Sciatic nerve (tissue), 2 donors: ENCODE measurements at regions of chr17 and their contacts with region 1.

Region 1: DNA sequence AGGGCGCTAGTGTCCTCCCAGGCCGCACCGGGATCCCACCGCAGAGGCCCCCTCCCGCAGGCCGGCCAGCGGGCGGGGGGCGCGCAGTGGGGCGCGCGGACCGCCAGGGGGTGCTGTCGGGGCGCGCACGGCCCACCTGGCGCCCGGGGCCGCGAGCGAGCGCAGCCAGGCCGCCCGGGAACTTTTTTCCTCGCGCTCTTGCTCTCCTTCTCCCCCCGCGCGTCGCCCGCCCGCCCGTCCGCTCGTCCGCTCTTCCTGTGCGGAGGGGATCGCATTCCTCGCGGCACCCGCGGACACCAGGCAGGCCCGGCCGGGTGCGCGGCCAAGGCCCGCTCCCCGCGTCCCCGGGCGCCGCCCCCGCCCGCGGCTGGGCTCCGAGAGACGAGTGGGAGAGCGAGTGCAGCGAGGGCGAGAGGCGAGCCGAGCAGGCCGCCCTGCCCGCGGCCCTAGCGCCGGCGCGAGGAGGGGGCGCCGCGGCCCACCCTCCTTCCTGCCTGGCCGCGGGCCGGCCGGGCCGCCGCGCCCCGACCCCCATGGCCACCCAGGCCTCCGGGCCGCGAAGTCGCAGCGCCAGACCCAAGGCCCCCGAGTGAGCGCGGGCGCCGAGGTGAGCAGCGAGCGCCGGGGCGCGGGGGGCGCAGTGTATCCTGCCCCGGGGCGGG is at the start of gene RAI1:
- DNase-seq: peak; percentile 88
- ATAC-seq: peak; percentile 73
- total RNA-seq, gene RAI1: 62.0 TPM

Region 2: DNA sequence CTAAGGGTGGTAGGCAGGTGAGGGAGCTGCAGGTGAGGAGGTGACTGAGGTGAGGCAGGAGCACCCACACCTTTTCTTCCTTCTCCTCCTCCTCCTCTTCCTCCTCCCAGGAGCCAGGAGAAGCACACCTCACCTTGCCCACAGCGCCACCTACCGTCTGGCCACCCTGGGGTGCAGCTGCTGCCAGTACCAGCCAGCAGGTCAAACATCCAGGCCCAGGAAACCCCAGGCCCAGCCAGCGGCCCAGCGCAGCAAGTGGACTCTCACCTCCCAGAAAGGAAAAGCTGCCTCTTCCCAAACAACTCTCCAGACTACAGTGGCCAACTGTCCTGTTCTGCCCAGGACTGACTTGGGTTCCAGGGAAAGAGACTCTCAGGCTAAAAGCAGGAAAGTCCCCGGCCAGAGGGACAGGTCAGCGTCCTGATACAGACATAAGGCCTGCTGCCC is 112.5 kb before region 1 on chr17:
- intact Hi-C with region 1: no loop called
- DNase-seq: peak; percentile 81
- ATAC-seq: no peak

Region 3: DNA sequence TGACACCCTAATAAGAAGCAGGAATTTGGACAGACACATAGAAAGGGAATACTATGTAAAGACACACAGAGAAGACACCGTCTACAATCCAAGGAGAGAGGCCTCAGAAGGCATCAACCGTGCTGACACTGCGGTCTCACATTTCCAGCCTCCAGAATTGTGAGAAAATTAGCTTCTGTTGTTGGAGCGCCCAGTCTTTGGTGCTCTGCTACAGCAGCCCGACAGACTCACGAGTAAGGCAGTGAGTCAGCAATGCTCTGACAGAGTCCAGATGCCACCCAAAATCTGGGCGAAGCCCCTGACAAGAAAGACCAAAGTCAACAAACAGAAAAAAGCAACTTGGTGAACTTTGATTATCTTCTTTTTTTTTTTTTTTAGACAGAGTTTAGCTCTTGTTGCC is 32.6 kb before region 1 on chr17:
- intact Hi-C with region 1: no loop called
- DNase-seq: no peak
- ATAC-seq: no peak

Region 4: GRCh38 chr17:17792551-17793377 is 111.4 kb after region 1 on chr17:
- intact Hi-C with region 1: loop called (anchors 10 kb)
- DNase-seq: no peak
- ATAC-seq: peak; percentile 52

Region 5: DNA sequence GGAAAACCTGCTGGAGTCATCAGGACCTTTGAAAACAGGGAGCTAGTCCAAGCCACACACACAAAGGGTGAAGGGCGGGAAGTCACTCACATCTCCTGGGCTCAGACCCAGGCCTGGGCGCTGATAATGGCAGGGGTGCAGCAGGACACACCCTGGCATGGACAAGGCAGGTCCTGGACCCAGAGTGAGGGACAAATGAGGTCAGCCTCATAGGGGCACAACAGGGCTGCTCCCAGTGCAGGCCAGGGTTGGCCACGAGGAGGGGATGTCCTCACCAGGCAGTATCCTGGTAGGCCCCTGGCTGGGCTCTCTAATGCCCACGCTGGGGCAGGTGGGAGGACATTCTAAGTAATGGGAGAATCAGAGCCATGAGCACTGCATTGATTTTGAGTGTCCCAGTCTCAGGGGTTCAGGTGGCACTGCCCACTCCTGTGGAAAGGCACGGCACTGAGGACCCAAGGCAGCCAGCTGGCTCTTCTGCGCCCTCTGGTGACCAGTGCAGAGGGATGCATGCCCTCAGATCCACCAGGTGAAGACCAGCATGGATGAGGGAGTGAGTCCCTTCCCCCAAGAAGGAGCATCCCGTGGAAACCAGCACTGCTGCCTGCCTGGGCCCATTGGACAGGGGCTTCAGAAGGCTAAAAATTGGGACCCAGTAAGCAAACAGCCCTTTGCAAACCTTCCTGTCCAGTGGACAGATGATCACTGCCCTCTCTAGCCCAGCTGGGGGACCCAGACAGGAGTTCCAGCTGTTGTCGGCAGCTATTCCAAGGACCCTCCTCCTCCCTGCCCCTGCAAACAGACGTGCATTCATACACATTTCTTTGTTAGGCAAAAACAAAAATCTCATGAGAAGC is 178.8 kb after region 1 on chr17:
- intact Hi-C with region 1: loop called (anchors 5 kb)
- DNase-seq: peak; percentile 85
- ATAC-seq: peak; percentile 92

Region 6: DNA sequence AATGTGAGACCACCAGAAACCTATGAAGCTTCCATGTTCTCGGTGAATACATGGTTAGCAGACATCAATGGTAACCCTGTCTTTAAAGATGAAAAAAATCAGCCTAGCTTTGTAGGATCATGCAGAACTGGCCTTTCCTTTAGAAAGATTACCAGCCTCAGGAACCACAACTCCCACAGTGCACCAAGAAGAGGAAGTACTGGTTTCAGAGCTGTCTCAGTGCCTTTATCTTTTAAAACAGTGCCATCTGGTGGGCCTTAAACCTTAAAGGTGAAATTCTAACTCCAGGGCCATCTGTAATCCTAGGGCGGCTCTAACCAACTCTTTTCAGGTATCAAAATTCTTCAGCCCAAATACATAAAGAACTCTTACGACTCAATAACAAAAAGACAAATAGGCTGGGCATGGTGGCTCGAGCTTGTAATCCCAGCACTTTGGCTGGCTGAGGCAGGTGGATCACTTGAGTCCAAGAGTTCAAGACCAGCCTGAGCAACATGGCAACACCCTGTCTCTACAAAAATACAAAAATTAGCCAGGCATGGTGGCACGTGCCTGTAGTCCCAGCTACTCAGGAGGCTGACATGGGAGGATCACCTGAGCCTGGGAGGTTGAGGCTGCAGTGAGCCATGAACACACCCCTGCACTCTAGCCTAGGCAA is 352.3 kb after region 1 on chr17:
- intact Hi-C with region 1: loop called (anchors 5 kb)
- DNase-seq: no peak
- ATAC-seq: peak; percentile 91